HEK293 (cell line): ENCODE measurements at regions of chr5 and their contacts with region 1.

Region 1: GRCh38 chr5:148957591-148958202 is 105.2 kb downstream of the SH3TC2 start:
- H3K4me3 ChIP-seq: no peak overlapping the region
- H3K27ac ChIP-seq: no peak overlapping the region
- H3K4me1 ChIP-seq: no peaks in the 10 kb centered on the region
- CTCF ChIP-seq: peak; percentile 64; the same call in 1 of the 2 replicates

Region 2: DNA sequence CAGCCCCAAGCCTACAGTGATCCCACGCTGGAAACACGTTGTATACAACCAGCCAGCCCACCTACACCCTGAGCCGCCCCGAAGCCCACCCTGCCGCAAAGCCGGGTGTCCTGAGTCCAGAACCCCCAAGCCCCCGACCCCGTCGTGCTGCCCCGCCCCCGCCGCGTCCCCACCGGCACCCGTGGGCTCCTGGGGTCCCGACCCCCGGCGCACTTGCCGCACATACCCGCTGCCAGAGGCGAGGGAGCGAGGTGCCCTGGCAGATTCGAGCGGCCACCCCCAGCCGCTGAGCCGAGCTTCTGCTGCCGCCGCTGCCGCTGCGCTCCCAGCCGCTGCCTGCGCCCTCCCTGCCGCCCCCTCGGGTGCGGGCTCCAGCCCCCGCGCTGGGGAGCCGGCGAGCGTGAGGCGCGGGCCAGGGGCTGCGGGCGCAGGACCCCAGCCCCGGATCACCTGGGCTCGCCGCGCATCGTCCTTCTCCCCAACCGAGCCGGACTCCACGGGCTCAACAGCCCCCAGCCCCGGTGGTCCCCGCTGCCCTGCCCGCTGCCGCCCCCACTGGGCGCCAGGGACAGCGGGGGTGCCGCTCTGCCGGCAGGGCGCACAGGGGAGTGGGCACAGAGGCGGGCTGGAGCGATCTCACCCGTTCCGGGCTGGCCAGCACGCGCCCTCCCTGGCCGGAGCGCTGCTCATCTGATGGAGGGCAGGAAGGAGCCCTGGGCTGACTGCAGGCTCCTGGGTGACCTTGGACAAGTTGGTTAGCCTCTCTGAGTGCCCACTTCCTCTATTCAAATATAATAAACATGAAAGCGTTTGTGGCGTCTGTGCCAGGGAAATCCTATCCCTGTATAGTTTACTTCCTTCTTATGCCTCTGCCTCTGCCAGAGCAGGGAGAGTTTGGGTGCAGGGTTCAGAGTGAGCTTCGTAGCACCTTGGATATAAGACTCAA is 303.6 kb before region 1 on chr5 and contains the start of gene HTR4:
- CTCF ChIA-PET with region 1: no interaction called
- POLR2A ChIA-PET with region 1: no interaction called
- H3K4me3 ChIP-seq: peak within 1 kb of the TSS; percentile 23; the same call in 1 of the 2 replicates
- H3K27ac ChIP-seq: no peak within 1 kb of the TSS
- H3K4me1 ChIP-seq: no peaks in the 10 kb centered on the region; the same call in 1 of the 2 replicates
- CTCF ChIP-seq: no peak

Region 3: DNA sequence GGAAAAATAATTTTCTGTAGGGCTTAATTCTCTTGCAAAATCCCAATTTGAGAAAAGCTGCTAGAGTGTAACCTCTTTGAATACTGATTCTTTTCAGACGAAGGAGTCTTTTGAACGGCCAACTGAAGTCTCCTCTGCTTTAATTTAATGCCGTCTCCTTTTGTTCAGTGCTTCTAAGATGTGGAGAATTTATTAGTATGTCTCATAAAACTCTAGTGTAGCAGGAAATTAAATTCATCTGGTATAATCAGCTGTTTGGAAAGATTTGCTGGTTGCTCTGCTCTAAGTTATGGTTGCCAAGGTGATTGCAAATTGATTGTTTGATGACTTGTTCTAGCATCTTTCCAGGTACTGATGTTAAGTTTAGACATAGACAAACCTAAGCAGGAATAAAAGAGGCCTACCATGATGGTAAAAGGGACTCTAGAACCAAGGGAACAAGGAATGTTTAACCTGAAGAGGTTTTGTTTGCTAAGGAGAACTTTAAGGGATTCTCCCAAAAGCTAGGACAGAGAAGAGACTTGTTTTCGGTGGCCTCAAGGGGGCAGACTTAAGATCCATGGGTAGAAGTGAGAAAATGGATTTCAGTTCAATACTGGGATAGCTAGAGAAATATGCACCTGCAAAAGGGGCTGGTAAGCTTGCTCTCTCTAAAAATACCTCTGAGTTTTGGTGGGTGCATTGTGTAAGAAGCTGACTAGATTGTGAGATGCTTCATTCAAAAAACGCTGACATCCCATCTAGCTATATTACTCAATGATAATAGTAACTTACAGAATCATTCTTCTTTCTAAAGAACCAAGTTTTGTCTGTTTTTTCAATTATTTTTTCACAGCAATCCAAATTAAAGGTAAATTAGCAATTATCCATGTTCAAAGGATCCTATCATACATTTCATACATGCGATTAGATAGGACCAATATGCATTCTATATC is 137.0 kb before region 1 on chr5:
- CTCF ChIA-PET with region 1: interaction called, 23 read pairs
- POLR2A ChIA-PET with region 1: interaction called, 4 read pairs
- H3K4me3 ChIP-seq: no peak overlapping the region
- H3K27ac ChIP-seq: no peak overlapping the region
- H3K4me1 ChIP-seq: peaks cover 5% of the 10 kb centered on the region; the same call in 1 of the 2 replicates
- CTCF ChIP-seq: peak; percentile 32

Region 4: GRCh38 chr5:148937239-148937638 is 20.5 kb before region 1 on chr5:
- CTCF ChIA-PET with region 1: interaction called, 13 read pairs
- POLR2A ChIA-PET with region 1: no interaction called
- H3K4me3 ChIP-seq: no peak overlapping the region
- H3K27ac ChIP-seq: no peak overlapping the region
- H3K4me1 ChIP-seq: no peaks in the 10 kb centered on the region
- CTCF ChIP-seq: no peak

Region 5: DNA sequence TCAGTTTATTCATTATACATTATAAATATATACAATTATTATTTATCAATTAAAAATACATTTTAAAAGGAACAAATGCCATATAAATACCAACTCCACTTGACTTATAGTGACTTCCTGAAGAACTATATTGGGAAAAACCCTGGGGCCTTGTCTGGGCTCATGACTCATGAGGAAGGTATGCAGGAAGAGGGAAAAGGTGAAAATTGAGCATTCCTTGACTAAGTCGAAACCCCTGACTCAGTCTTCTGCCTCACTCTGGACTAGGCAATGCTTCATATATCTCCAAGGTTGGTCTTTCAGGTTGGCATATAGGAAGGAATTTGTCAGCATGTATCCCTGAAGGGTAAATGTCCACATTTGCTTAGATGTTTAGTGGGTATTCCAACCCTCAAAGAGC is 26.6 kb after region 1 on chr5:
- CTCF ChIA-PET with region 1: interaction called, 10 read pairs
- POLR2A ChIA-PET with region 1: no interaction called
- H3K4me3 ChIP-seq: no peak overlapping the region
- H3K27ac ChIP-seq: no peak overlapping the region
- H3K4me1 ChIP-seq: peaks cover 2% of the 10 kb centered on the region; the same call in 1 of the 2 replicates
- CTCF ChIP-seq: no peak

Region 6: DNA sequence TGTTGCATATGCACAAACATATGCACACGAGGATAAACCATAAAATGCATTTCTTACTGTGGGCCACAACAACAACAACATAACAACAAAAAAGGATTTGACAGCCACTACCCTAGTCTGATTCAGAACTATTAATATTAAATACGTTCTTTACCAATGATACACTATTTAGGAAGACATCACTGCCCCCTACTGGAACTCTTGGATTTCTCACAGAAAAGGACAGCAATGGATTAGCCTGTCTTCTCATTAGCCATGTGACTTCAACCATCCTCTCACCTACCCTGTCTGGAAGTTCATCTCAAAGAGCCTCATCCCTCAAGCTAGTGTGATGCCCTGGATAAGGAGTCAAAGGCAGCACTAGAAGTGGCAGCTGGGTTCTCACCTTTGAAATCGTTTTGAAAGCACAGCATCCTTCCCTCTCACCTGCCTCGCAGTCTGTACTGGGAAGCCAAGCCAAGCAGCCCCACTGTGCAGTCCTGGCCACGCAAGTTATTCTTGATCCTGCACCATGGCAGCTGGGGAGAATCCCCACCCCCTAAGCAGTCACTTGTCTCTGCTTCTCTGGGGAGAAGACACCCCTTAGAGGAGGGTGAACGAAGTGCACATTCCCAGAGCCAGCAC is 40.6 kb after region 1 on chr5:
- CTCF ChIA-PET with region 1: interaction called, 45 read pairs
- POLR2A ChIA-PET with region 1: no interaction called
- H3K4me3 ChIP-seq: no peak overlapping the region
- H3K27ac ChIP-seq: no peak overlapping the region
- H3K4me1 ChIP-seq: no peaks in the 10 kb centered on the region
- CTCF ChIP-seq: peak; percentile 28; the same call in 1 of the 2 replicates